CD4-positive, alpha-beta T cell (primary cell): ENCODE measurements at regions of chr21 and their contacts with region 1.

Region 1: DNA sequence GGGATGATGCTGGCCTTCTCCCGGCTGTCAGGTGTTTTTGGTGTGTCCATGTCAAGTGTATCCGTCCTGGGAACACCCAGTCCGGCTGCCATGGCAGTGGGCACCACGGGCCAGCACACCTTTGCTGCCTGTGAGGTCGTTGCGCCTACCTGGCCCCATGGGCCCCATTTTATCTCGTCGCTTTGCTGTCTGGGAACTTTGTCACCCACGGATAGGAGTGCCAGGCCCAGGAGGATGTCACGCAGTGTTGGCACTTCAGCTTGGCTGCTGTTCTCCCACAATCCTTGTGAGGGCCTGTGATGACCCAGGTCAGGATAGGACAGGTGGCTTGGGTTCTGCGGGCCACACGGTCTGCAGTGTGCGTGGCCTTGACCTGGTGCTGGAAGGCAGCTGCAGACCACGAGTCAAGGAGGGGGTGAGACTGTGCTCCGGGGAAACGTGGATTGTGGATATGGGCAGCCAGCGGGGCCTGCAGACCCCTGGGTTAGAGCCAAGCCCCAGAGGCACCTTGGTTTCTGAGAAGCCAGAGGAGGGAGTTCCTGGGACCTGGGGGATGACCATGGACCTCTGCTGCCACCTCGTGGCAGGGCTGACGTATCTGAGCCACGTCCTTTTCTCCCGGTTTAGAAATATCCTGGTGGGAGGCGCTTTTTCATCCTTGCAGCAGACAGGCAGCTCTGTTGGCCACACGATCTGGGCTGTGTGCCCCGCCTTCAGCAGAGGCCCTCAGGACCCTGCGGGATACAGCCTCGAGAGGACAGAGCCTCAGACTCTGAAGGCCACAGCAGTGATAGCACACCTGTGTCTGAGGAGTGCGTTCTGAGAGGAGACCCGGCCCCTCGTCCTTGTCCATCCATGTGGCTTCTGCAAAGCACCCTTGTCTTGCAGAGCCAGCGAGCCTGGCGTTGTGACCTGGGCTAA is 161.1 kb upstream of the COL6A1 start:
- DNase-seq: peak; percentile 73 to 90 (median 76)
- ATAC-seq: peak; percentile 66
- H3K4me3 ChIP-seq: no peak overlapping the region
- H3K4me3 Mint-ChIP-seq: no peak overlapping the region
- H3K27ac ChIP-seq: no peak overlapping the region
- H3K27ac Mint-ChIP-seq: peak overlapping the region; percentile 28
- H3K4me1 ChIP-seq: peaks cover 17% of the 10 kb centered on the region
- H3K4me1 Mint-ChIP-seq: peaks cover 25% of the 10 kb centered on the region
- H3K27me3 ChIP-seq: no peaks in the 10 kb centered on the region
- H3K27me3 Mint-ChIP-seq: no peaks in the 10 kb centered on the region
- CTCF ChIP-seq: peak; percentile 91

Region 2: DNA sequence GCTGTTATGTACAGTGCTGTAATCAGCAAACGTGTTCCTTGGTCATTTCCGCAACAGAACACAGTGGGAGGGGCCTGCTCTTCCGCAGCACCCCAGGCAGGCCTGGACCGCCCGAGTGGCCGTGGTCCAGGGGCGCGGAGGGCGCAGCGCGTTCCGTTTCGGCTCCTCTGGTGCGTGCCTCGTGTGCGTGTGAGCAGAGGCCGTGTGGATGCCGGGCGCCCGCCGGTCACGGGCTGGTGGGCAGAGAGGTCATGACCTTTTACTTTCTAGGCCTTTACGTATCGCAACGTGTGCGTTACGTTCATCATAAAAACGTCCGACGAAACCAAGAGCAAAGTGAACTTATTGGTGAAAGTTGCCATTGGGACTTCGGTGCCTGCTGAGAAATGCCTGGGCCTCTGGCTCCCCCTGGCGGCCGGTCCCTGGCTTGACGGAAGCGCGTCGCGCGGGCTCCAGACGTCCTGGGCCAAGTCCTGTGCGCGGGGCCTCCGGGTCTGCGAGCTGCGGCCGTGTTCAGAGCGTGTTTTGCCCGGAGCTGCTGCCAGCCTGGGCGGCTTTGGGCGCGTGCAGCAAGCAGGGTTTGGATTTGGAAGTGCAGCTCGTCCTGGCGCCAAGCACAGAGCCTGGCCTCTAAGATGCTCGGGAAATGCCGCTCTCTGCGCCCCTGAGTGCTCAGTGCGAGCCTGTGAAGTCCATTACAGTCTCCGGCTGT is 381.1 kb before region 1 on chr21:
- CTCF ChIA-PET with region 1: no interaction called
- POLR2A ChIA-PET with region 1: no interaction called
- intact Hi-C with region 1: loop called (anchors 1 kb)
- DNase-seq: peak; percentile 73 to 92 (median 84)
- ATAC-seq: peak; percentile 85
- H3K4me3 ChIP-seq: peak overlapping the region; percentile 38
- H3K4me3 Mint-ChIP-seq: peak overlapping the region; percentile 74
- H3K27ac ChIP-seq: no peak overlapping the region
- H3K27ac Mint-ChIP-seq: peak overlapping the region; percentile 73
- H3K4me1 ChIP-seq: peaks cover 21% of the 10 kb centered on the region
- H3K4me1 Mint-ChIP-seq: peaks cover 21% of the 10 kb centered on the region
- H3K27me3 ChIP-seq: peaks cover 0 to 2% of the 10 kb centered on the region in 2 experiments
- H3K27me3 Mint-ChIP-seq: peaks cover 8% of the 10 kb centered on the region
- CTCF ChIP-seq: peak; percentile 91

Region 3: GRCh38 chr21:45554477-45555175 is 265.8 kb before region 1 on chr21:
- CTCF ChIA-PET with region 1: no interaction called
- POLR2A ChIA-PET with region 1: no interaction called
- intact Hi-C with region 1: loop called (anchors 1 kb)
- DNase-seq: peak; percentile 81 to 97 (median 91)
- ATAC-seq: peak; percentile 83
- H3K4me3 ChIP-seq: peak overlapping the region; percentile 67
- H3K4me3 Mint-ChIP-seq: peak overlapping the region; percentile 87
- H3K27ac ChIP-seq: no peak overlapping the region
- H3K27ac Mint-ChIP-seq: peak overlapping the region; percentile 89
- H3K4me1 ChIP-seq: peaks cover 47% of the 10 kb centered on the region
- H3K4me1 Mint-ChIP-seq: peaks cover 29% of the 10 kb centered on the region
- H3K27me3 ChIP-seq: no peaks in the 10 kb centered on the region
- H3K27me3 Mint-ChIP-seq: no peaks in the 10 kb centered on the region
- CTCF ChIP-seq: peak; percentile 72

Region 4: GRCh38 chr21:45643021-45643980 is 177.1 kb before region 1 on chr21 and contains the start of gene PCBP3:
- CTCF ChIA-PET with region 1: no interaction called
- POLR2A ChIA-PET with region 1: no interaction called
- intact Hi-C with region 1: loop called in 1 of 2 experiments (anchors 10 kb)
- DNase-seq: peak; percentile 89 to 99 (median 96)
- ATAC-seq: peak; percentile 78
- H3K4me3 ChIP-seq: peak within 1 kb of the TSS; percentile 24
- H3K4me3 Mint-ChIP-seq: peak within 1 kb of the TSS; percentile 77
- H3K27ac ChIP-seq: no peak within 1 kb of the TSS
- H3K27ac Mint-ChIP-seq: peak within 1 kb of the TSS; percentile 97
- H3K4me1 ChIP-seq: peaks cover 41% of the 10 kb centered on the region
- H3K4me1 Mint-ChIP-seq: peaks cover 53% of the 10 kb centered on the region
- H3K27me3 ChIP-seq: peaks cover 14 to 17% of the 10 kb centered on the region in 2 experiments
- H3K27me3 Mint-ChIP-seq: peaks cover 25% of the 10 kb centered on the region
- CTCF ChIP-seq: no peak
- total RNA-seq, gene PCBP3: 3.4 to 3.8 TPM

Region 5: GRCh38 chr21:45923146-45923545 is 102.7 kb after region 1 on chr21:
- CTCF ChIA-PET with region 1: no interaction called
- POLR2A ChIA-PET with region 1: no interaction called
- intact Hi-C with region 1: loop called in 1 of 2 experiments (anchors 1 kb)
- DNase-seq: peak; percentile 56 to 81 (median 69)
- ATAC-seq: peak; percentile 98
- H3K4me3 ChIP-seq: no peak overlapping the region
- H3K4me3 Mint-ChIP-seq: no peak overlapping the region
- H3K27ac ChIP-seq: no peak overlapping the region
- H3K27ac Mint-ChIP-seq: no peak overlapping the region
- H3K4me1 ChIP-seq: peaks cover 18% of the 10 kb centered on the region
- H3K4me1 Mint-ChIP-seq: peaks cover 4% of the 10 kb centered on the region
- H3K27me3 ChIP-seq: no peaks in the 10 kb centered on the region
- H3K27me3 Mint-ChIP-seq: no peaks in the 10 kb centered on the region
- CTCF ChIP-seq: peak; percentile 75